Body of pancreas (tissue), 4 donors: ENCODE measurements at regions of chr11 and their contacts with region 1.

Region 1: GRCh38 chr11:114262681-114263512 is 33.3 kb upstream of the NNMT start:
- DNase-seq: peak; percentile 48 to 56 (median 54)
- ATAC-seq: peak; percentile 41
- H3K4me3 ChIP-seq: no peak overlapping the region
- H3K27ac ChIP-seq: no peak overlapping the region
- H3K4me1 ChIP-seq: peaks cover 47% of the 10 kb centered on the region
- H3K27me3 ChIP-seq: no peaks in the 10 kb centered on the region
- CTCF ChIP-seq: peak; percentile 9 to 76 (median 70)
- POLR2A ChIP-seq: no peak

Region 2: GRCh38 chr11:113906038-113906437 is 356.9 kb before region 1 on chr11:
- intact Hi-C with region 1: loop called (anchors 10 kb)
- DNase-seq: peak; percentile 37 to 54 (median 45)
- ATAC-seq: peak; percentile 79
- H3K4me3 ChIP-seq: no peak overlapping the region
- H3K27ac ChIP-seq: peak overlapping the region in 3 of 4 donors; percentile 39 to 64 (median 63)
- H3K4me1 ChIP-seq: peaks cover 15% of the 10 kb centered on the region
- H3K27me3 ChIP-seq: no peaks in the 10 kb centered on the region
- CTCF ChIP-seq: peak in 6 of 7 experiments; percentile 13 to 47 (median 34)
- POLR2A ChIP-seq: no peak

Region 3: GRCh38 chr11:113994077-113994954 is 268.6 kb before region 1 on chr11:
- intact Hi-C with region 1: loop called (anchors 5 kb)
- DNase-seq: peak in 3 of 4 donors; percentile 16 to 43 (median 38)
- ATAC-seq: no peak
- H3K4me3 ChIP-seq: no peak overlapping the region
- H3K27ac ChIP-seq: no peak overlapping the region
- H3K4me1 ChIP-seq: no peaks in the 10 kb centered on the region
- H3K27me3 ChIP-seq: no peaks in the 10 kb centered on the region
- CTCF ChIP-seq: peak; percentile 17 to 67 (median 64)
- POLR2A ChIP-seq: no peak

Region 4: DNA sequence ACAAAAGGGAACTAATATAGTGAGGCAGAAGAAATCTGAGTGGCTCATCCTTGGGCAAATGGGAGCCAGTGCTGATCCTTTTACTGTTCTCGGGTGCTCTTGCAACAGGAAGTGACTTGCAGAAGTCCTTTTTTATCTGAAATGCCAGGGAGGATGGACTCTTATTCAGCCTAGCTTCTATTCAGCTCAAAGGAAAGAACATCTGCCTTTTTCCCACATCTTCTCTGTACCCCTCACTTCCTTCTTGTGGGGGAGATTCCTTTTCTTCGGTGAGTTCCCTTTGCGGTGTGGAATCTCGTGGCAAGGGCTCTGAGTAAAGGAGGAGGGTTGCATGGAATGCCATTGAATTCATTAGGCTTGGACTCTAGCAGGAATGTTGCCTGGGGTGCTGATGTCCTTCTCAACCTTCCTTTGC is 127.2 kb before region 1 on chr11:
- intact Hi-C with region 1: no loop called
- DNase-seq: no peak
- ATAC-seq: no peak
- H3K4me3 ChIP-seq: no peak overlapping the region
- H3K27ac ChIP-seq: peak overlapping the region in 2 of 4 donors; percentile 46 to 55
- H3K4me1 ChIP-seq: peaks cover 79% of the 10 kb centered on the region
- H3K27me3 ChIP-seq: no peaks in the 10 kb centered on the region
- CTCF ChIP-seq: no peak
- POLR2A ChIP-seq: peak in 1 of 3 donors; percentile 24